ENCODE measurements at regions of chr9 and their contacts with region 1.

Region 1: GRCh38 chr9:2526071-2526828 is 95.3 kb upstream of the VLDLR start:
- DNase-seq: no peak
- ATAC-seq: no peak
- H3K4me3 ChIP-seq: no peak overlapping the region
- H3K27ac ChIP-seq: no peak overlapping the region
- H3K4me1 ChIP-seq: peaks cover 0 to 5% (median 0%) of the 10 kb centered on the region in 9 donors
- H3K27me3 ChIP-seq: no peaks in the 10 kb centered on the region
- CTCF ChIP-seq: no peak

Region 2: GRCh38 chr9:2502760-2503159 is 23.5 kb before region 1 on chr9:
- intact Hi-C with region 1: loop called in 1 of 10 experiments (anchors 2 kb)
- DNase-seq: no peak
- ATAC-seq: no peak
- H3K4me3 ChIP-seq: no peak overlapping the region
- H3K27ac ChIP-seq: no peak overlapping the region
- H3K4me1 ChIP-seq: peaks cover 0 to 30% (median 6%) of the 10 kb centered on the region in 9 donors
- H3K27me3 ChIP-seq: no peaks in the 10 kb centered on the region
- CTCF ChIP-seq: no peak

Region 3: DNA sequence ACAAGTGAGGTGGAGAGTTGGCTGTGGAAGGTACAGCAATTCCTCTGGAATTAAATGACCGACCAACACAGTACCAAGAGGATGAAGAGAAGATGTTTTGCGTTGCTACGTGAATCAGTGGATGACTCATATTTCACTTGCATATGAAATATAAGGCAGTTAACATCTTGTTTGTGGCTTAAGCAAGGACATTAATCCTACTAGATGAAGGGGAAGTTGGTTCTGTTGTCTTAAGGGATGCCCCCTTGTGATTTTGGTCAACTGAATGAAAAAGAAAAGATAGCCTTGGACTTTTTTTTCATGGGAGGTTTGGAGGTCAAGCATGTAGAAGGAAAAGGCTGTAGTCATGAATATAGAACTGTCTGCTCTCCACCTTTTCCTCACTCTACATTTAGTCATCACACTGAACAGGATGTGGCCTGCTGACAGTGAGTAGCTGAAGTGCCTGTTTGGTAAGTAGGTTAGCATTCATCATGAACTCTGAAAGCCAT is 129.2 kb after region 1 on chr9:
- intact Hi-C with region 1: no loop called
- DNase-seq: no peak
- ATAC-seq: peak in 7 of 8 donors; percentile 47 to 82 (median 78)
- H3K4me3 ChIP-seq: no peak overlapping the region
- H3K27ac ChIP-seq: peak overlapping the region in 9 of 10 donors; percentile 13 to 76 (median 54)
- H3K4me1 ChIP-seq: peaks cover 0 to 35% (median 17%) of the 10 kb centered on the region in 9 donors
- H3K27me3 ChIP-seq: no peaks in the 10 kb centered on the region
- CTCF ChIP-seq: no peak

Region 4: DNA sequence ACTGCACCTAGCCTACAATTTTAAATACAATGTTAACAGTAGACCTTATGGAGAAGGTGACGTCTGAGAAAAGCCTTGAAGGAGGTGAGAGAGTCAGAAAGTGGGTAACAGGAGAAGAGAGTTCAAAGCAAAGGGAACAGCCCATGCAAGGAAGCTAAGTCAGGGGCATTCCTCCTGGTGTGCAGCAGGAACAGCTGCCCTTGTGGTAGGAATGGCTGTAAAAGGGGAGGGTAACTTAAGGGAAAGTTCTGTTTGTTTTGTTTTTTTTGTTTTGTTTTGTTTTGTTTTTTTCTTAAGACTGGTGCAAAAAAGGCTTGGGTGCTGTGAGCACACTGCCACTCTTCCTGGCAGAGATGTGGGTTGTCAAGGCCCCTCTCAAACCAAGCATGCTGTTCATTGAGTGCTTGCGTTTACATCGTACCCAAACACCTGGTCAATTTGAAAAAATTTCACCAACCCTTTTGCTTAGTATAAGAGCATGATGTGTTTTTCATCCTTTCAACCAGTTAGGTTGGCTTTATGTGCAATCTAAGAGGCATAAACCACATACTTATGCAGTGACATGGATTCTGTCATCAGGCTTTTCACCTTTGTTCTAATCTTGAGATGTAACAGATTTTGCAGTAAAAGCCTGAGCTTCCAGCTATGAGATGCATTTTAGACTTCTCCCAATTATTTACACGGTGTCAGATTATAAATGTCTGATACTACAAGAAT is 1493.9 kb after region 1 on chr9:
- intact Hi-C with region 1: no loop called
- DNase-seq: no peak
- ATAC-seq: no peak
- H3K4me3 ChIP-seq: no peak overlapping the region
- H3K27ac ChIP-seq: no peak overlapping the region
- H3K4me1 ChIP-seq: peaks cover 0 to 8% (median 0%) of the 10 kb centered on the region in 9 donors
- H3K27me3 ChIP-seq: no peaks in the 10 kb centered on the region
- CTCF ChIP-seq: no peak